Head of caudate nucleus (tissue), 42 donors: ENCODE measurements at regions of chr3 and their contacts with region 1.

Region 1: GRCh38 chr3:53072653-53073552 is 27.0 kb upstream of the SFMBT1 start:
- DNase-seq: peak; percentile 76 to 92 (median 84)

Region 2: DNA sequence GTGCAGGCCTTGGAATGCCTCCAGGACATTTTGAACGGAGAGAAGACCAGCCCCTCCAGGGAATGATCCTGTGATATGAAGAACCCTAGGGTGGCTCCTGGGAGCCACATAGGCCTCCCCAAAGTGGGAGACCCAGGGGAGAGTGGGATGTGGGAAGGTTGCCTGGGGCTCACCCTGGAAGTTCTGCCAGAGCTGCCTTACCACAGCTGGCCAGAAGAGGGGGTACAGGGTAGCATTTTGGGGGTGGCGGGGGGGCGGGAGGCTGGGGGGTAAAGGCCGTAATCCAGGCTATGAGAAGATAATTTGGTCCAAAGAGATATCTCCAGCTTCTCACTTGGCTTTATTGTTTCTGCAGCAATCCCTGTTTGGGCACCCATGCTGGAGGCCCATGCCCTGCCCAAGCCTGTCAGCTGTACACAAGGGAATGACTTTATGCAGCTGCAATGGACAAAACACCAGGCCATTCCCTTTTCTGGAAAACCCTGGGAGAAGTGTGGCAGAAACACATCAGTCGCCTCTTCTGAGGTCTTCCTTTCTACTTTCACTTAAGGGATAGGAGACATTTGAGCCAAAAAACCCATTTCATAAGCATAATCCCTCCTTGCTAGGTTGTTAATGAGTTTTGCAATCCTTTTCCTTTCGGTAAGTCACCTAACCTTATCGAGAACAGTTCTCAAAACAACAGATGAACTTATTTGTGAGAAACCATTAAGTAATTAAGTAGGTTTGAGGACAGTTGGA is 227.0 kb before region 1 on chr3:
- intact Hi-C with region 1: loop called (anchors 10 kb)
- DNase-seq: peak in 26 of 42 donors; percentile 14 to 74 (median 40)

Region 3: DNA sequence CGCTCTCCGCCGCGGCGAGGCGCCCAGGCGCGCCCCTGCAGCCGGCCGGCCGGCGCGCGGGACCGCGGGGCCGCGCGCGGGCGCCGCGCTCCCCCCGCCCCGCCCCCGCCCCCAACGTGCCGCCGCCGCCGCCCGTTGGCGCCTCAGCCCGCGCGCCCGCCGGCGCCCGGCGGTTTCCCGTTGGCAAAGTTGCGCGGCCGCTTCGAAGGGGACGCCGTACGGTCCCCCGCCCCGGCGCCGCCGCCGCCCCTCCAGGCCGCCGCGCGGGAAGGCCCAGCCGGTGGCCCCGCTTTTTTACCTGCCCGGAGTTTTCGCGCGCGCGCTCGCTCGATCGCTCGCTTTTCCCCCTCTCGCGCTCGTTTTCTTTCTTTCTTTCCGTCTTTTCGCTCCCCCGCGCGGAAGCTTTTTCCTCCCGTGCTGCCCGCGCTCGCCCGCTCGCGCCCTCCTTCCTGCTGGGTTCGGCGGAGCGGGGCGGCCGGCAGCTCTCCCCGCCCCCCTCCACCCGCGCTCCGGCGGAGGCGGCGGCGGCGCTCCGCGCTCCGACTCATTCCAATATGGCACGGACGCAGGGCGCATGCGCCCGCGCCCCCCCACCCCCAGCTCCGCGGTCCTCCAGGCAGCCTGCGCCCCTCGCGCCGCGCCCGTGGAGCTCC is 27.3 kb before region 1 on chr3 and contains the start of gene SFMBT1:
- intact Hi-C with region 1: no loop called
- DNase-seq: peak in 41 of 42 donors; percentile 24 to 87 (median 69)